ENCODE measurements at regions of chr17 and their contacts with region 1.

Region 1: GRCh38 chr17:10881959-10882358 is 44.1 kb upstream of the PIRT start:
- DNase-seq: no peak
- ATAC-seq: no peak

Region 2: DNA sequence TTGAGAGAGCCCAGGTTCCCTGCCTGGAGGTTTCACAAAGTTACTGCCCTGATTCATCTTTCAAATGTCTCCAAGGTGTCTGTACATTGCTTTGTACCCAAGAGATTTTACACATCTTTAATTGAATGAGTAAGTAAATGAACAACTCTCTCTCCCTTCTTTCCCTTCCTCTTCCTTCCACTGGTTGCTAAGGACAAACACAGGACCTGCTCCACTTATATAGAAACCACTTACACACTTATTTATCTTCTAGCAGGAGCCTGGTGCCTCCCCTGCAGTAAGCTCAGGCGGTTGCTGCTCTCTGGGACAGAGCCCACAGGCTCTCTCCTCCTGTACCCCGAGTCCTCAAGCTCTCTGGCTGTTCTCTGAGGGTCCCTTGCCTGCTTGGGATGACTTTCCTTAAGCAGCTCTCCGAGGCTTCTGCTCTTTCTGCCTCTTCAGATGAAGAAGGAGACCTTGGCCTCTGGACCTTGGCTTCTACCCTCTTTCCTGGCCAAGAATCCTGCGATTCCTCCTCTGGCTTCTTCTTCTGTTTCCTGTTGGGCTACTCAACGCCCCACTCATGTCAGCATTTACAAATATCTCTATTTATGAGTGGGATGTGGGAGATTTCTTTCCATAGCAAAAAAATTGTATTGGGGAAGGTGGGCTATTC is 53.9 kb before region 1 on chr17:
- intact Hi-C with region 1: no loop called
- DNase-seq: no peak
- ATAC-seq: no peak

Region 3: GRCh38 chr17:11144358-11145233 is 262.6 kb after region 1 on chr17:
- intact Hi-C with region 1: loop called (anchors 2 to 5 kb)
- DNase-seq: peak; percentile 31
- ATAC-seq: peak in 1 of 2 donors; percentile 72

Region 4: DNA sequence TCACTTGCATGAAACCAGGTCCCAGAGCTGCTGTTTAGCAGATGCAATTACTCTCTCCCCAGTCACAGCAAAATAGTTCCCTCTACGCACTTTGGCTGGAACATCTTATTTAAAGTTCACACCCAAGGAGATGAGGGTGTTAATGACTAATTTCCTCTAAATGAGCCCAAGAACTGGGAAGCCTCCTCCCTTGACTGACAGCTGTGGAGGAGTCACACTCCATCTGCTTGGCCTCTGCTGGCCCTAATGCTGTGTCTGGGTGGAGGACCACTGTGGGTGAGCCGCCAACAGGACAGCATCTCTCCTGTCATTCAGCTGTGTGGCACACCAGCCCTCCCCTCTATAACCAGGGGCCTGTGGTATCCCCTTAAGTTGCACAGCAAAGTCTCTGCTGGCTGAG is 474.4 kb after region 1 on chr17:
- intact Hi-C with region 1: no loop called
- DNase-seq: no peak
- ATAC-seq: no peak

Measured in left cardiac atrium (tissue), 4 donors.